Activated CD4-positive, alpha-beta memory T cell treated with anti-CD3 and anti-CD28 coated beads, Interleukin-2, amount 10 ng/mL, durations not matched to agents 7 days and 5 days (primary cell): ENCODE measurements at regions of chrX and their contacts with region 1.

Region 1: GRCh38 chrX:16826207-16826606 is 39.9 kb downstream of the TXLNG start:
- DNase-seq: no peak
- H3K4me3 Mint-ChIP-seq: no peak overlapping the region
- H3K27ac Mint-ChIP-seq: no peak overlapping the region
- H3K4me1 Mint-ChIP-seq: peaks cover 27% of the 10 kb centered on the region
- H3K27me3 Mint-ChIP-seq: no peaks in the 10 kb centered on the region

Region 2: DNA sequence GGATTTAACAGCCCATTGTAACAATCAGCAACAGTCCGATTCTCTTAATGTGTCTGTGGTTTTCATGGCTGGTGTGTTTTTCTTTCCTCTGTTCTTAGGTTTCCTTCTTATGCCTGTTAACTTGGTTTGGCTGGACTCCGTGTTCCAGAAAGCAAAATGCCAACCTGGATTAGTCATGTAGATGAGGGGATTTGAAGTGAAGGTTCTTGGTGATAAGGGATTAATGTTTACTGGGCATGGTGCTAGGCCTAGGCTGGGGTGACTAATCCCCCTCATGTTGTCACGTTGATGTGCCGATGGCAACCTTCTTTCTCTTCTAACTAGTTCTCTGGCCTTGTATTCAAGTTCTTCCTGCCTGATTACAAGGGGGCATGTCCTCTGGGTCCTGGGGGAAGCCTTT is 206.1 kb after region 1 on chrX:
- CTCF ChIA-PET with region 1: no interaction called
- POLR2A ChIA-PET with region 1: no interaction called
- DNase-seq: no peak
- H3K4me3 Mint-ChIP-seq: no peak overlapping the region
- H3K27ac Mint-ChIP-seq: no peak overlapping the region
- H3K4me1 Mint-ChIP-seq: peaks cover 6% of the 10 kb centered on the region
- H3K27me3 Mint-ChIP-seq: peaks cover 2% of the 10 kb centered on the region

Region 3: GRCh38 chrX:17046478-17047097 is 220.4 kb after region 1 on chrX:
- CTCF ChIA-PET with region 1: interaction called, 16 read pairs
- POLR2A ChIA-PET with region 1: no interaction called
- DNase-seq: peak; percentile 33
- H3K4me3 Mint-ChIP-seq: no peak overlapping the region
- H3K27ac Mint-ChIP-seq: no peak overlapping the region
- H3K4me1 Mint-ChIP-seq: no peaks in the 10 kb centered on the region
- H3K27me3 Mint-ChIP-seq: no peaks in the 10 kb centered on the region